Posterior vena cava (tissue), 2 donors: ENCODE measurements at regions of chr20 and their contacts with region 1.

Region 1: DNA sequence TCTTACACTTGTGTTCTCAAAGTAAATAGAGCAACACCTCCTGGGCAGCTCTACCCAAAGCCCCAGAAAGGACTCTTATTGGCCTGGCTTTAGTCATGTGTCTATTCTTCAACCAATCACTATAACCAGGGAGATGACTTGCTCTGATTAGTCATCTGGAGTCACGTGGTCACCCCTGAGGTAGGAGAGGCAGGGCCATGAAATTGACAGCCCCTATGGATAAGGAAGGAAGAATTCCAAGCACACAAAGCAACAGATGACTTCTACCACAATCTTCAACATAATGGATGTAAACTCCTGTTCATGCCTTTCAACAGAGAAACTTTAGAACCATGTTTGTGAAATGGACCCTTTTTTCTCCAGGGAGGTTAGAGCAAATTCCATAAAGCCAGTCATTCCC is 24.6 kb upstream of the EYA2 start:
- DNase-seq: no peak

Region 2: GRCh38 chr20:46827718-46828458 is 42.2 kb before region 1 on chr20:
- intact Hi-C with region 1: loop called in 1 of 2 experiments (anchors 1 kb)
- DNase-seq: no peak

Region 3: GRCh38 chr20:46914789-46915379 is 44.8 kb after region 1 on chr20:
- intact Hi-C with region 1: no loop called
- DNase-seq: no peak